ENCODE measurements at regions of chr7 and their contacts with region 1.

Region 1: DNA sequence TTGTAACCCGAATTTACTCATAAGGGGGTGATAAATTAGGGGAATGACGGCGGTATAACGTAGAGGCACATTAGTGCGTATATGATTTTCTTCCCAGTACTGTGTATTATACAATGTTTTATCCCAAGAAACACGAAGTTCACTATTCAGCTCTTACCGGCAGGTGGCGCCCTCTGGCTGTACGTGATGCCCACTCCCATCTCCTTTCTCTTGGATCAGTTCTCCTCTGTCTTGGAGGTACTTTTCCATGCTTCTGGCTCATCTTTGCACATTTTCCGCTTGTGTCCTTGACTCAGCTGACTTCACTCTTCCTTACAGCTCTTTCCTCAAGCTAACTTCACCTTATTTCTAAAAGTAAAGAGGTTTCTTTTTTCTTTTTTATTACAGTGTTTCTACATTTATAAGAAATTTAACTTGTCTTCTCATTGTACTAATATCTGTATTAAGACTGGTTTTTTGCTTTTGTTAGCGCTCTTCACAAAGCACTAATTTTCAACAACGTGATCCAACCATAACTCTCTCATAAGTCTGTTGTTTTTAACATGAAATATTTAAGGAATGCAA is 21.3 kb downstream of the TMEM176B start:
- DNase-seq: peak; percentile 78
- H3K4me3 ChIP-seq: no peak overlapping the region; a peak in 1 of 4 replicates
- H3K27ac ChIP-seq: 0 out of 4 replicates have a peak overlapping the region, but pooled peaks of 1 of the 2 experiments have one; percentile 7
- H3K4me1 ChIP-seq: peaks cover 0 to 6% of the 10 kb centered on the region in 2 experiments; a peak in 2 of 4 replicates
- H3K27me3 ChIP-seq: no peaks in the 10 kb centered on the region; the same call in 1 of the 2 replicates
- CTCF ChIP-seq: peak; percentile 99
- EP300 ChIP-seq: no peak
- RAD21 ChIP-seq: peak; percentile 100

Region 2: GRCh38 chr7:150567169-150567568 is 211.7 kb before region 1 on chr7 and contains the start of gene GIMAP4:
- CTCF ChIA-PET with region 1: no interaction called
- POLR2A ChIA-PET with region 1: no interaction called
- DNase-seq: no peak
- H3K4me3 ChIP-seq: no peak within 1 kb of the TSS
- H3K27ac ChIP-seq: no peak within 1 kb of the TSS
- H3K4me1 ChIP-seq: no peaks in the 10 kb centered on the region
- H3K27me3 ChIP-seq: no peaks in the 10 kb centered on the region
- CTCF ChIP-seq: no peak
- EP300 ChIP-seq: no peak
- RAD21 ChIP-seq: no peak
- polyA plus RNA-seq, gene GIMAP4: not detected in 2 replicates

Region 3: DNA sequence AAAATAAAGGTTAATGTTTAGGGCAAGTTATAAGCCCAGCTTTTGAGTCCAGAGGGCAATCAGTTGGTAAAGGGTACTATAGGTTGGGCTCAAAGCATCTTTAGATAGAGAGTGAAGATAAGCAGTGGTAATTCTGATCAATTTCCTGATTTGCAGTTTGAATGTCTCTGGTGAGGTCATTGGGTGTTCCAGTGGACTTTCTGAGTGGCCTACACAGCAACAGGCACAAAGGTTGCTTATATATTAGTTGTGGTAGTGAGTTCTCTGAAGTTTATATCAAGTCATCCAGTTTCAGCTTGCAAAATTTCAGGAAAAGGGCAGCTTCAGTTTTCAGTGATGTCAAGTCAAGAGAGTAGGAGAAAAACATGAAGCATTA is 12.5 kb before region 1 on chr7:
- CTCF ChIA-PET with region 1: interaction called, 25 read pairs
- POLR2A ChIA-PET with region 1: no interaction called
- DNase-seq: no peak
- H3K4me3 ChIP-seq: no peak overlapping the region
- H3K27ac ChIP-seq: no peak overlapping the region
- H3K4me1 ChIP-seq: no peaks in the 10 kb centered on the region
- H3K27me3 ChIP-seq: no peaks in the 10 kb centered on the region
- CTCF ChIP-seq: no peak
- EP300 ChIP-seq: no peak
- RAD21 ChIP-seq: no peak

Region 4: DNA sequence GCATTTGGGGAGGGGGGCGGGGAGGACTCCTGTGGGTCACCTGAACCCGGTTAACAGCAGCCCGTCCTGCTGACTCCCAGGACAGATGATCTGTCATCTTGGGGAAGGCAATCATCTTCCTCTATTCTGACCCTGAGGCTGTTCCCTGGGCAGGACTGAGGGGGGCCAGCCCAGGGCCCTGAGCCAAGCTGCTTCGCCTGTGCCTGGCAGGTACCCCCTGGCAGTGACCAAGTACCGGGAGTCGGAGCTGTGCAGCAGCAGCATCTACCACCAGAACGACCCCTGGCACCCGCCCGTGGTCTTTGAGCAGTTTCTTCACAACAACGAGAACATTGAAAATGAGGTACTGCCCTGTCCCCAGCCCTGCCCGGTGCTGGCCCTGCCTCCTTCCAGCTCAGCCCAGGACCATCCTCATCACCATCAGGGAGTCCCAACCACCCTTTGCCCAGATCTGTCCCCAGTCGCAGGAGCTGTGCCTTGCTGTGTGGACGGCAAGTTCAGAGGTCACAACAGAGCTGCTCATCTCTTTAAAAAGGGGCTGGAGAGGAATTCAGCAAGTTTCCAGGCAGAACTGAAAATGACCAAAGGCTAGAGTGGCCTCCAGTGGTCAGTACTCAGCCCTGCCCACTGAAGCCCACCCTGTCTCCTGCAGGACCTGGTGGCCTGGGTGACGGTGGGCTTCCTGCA is 81.6 kb after region 1 on chr7:
- CTCF ChIA-PET with region 1: interaction called, 18 read pairs
- POLR2A ChIA-PET with region 1: no interaction called
- DNase-seq: peak; percentile 58
- H3K4me3 ChIP-seq: no peak overlapping the region
- H3K27ac ChIP-seq: no peak overlapping the region
- H3K4me1 ChIP-seq: peaks cover 0 to 6% of the 10 kb centered on the region in 2 experiments; a peak in 1 of 4 replicates
- H3K27me3 ChIP-seq: no peaks in the 10 kb centered on the region
- CTCF ChIP-seq: no peak
- EP300 ChIP-seq: no peak
- RAD21 ChIP-seq: peak; percentile 62

Region 5: DNA sequence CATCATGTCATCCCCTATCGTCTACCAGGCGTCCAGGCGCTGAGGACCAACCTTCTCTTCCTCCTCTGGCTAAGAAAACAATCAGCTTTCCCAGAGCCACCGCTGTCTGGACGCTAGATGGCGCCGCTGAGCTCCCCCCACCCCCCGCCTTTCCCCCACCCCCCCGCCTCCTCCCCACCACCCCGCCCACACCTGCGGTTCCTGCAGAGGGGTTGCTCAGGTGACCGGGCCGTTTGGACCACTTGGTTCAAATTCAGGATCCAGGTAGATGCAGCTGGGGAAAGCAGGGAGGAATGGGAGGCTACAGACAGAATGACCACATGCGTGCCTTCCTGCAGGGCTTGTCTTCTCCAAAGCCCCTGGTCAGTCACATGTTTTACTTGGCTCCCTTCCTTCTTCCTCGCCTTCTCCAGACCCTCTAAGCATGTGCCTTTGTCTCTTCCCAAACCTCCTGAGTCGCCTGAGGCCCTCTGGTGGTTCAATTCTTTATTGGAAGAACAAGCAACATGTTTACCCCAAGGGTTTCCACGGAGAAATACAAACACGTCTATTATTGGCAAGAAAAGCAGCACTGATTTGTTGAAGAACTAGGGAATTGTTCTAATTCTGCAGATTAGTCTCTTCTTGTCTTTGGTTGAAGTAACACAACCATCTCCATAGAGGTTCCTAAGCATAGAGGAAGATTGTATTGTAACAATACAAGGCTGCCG is 98.2 kb after region 1 on chr7:
- CTCF ChIA-PET with region 1: interaction called, 136 read pairs
- POLR2A ChIA-PET with region 1: no interaction called
- DNase-seq: peak; percentile 91
- H3K4me3 ChIP-seq: no peak overlapping the region
- H3K27ac ChIP-seq: peak overlapping the region in 1 of 2 experiments; percentile 60; a peak in 2 of 4 replicates
- H3K4me1 ChIP-seq: peaks cover 5% of the 10 kb centered on the region in 2 experiments; a peak in 2 of 4 replicates
- H3K27me3 ChIP-seq: no peaks in the 10 kb centered on the region
- CTCF ChIP-seq: peak; percentile 58
- EP300 ChIP-seq: no peak
- RAD21 ChIP-seq: peak; percentile 69

Region 6: GRCh38 chr7:150955519-150956394 is 176.9 kb after region 1 on chr7:
- CTCF ChIA-PET with region 1: interaction called, 18 read pairs
- POLR2A ChIA-PET with region 1: no interaction called
- DNase-seq: peak; percentile 97
- H3K4me3 ChIP-seq: peak overlapping the region in 1 of 2 experiments; percentile 45; a peak in 2 of 4 replicates
- H3K27ac ChIP-seq: peak overlapping the region in 1 of 2 experiments; percentile 94; a peak in 3 of 4 replicates
- H3K4me1 ChIP-seq: peaks cover 0 to 85% of the 10 kb centered on the region in 2 experiments; a peak in 2 of 4 replicates
- H3K27me3 ChIP-seq: peaks cover 15% of the 10 kb centered on the region; the same call in 1 of the 2 replicates
- CTCF ChIP-seq: no peak
- EP300 ChIP-seq: peak in 1 of 2 experiments; percentile 12; a peak in 1 of 4 replicates
- RAD21 ChIP-seq: peak; percentile 3; the same call in 1 of the 2 replicates

Region 7: DNA sequence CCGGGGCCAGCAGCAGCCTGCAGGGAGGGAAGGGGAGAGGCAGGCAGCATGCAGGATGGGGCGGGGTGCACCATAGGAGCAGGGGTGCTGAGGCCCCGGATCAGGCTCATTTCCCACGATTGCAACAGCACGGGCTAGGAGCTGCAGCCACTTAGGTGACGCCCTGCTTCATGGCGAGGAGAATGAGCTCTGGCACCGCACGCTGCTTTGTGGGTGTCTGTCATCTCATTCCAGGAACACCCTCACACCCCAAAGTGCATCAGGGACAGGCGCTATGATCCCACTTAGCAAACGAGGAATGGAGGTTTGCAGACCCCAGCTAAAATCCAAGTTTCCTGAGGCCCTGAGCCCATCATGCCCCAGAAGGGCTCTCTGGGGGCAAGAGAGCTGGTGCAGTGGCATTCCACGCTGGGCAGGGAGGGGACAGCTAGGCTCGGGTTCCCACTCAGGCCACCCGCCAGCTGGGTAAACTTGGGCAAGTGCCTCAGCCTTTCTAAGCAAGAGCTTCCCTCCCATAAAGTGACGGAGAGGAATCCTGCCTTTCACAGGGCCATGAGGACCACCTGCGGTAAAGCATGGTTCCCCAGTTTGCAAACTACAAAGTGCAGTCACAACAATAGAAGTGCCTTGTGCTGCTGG is 190.0 kb after region 1 on chr7:
- CTCF ChIA-PET with region 1: interaction called, 41 read pairs
- POLR2A ChIA-PET with region 1: no interaction called
- DNase-seq: no peak
- H3K4me3 ChIP-seq: no peak overlapping the region
- H3K27ac ChIP-seq: peak overlapping the region in 1 of 2 experiments; percentile 100; a peak in 1 of 4 replicates
- H3K4me1 ChIP-seq: peaks cover 0 to 94% of the 10 kb centered on the region in 2 experiments; a peak in 2 of 4 replicates
- H3K27me3 ChIP-seq: peaks cover 71% of the 10 kb centered on the region
- CTCF ChIP-seq: no peak
- EP300 ChIP-seq: no peak
- RAD21 ChIP-seq: no peak

Measured in SK-N-SH (cell line).